ENCODE measurements at regions of chr12 and their contacts with region 1.

Region 1: GRCh38 chr12:92145731-92146496 is at the start of gene BTG1:
- DNase-seq: peak; percentile 100
- H3K4me3 Mint-ChIP-seq: peak within 1 kb of the TSS; percentile 89
- H3K27ac Mint-ChIP-seq: peak within 1 kb of the TSS; percentile 74
- H3K4me1 Mint-ChIP-seq: peaks cover 16% of the 10 kb centered on the region
- H3K27me3 Mint-ChIP-seq: no peaks in the 10 kb centered on the region
- CTCF ChIP-seq: no peak
- total RNA-seq, gene BTG1: 128 and 129 TPM in 2 replicates

Region 2: GRCh38 chr12:91382081-91382543 is 763.8 kb before region 1 on chr12:
- CTCF ChIA-PET with region 1: interaction called, 8 read pairs
- POLR2A ChIA-PET with region 1: interaction called, 154 read pairs
- intact Hi-C with region 1: loop called (anchors 1 kb)
- DNase-seq: peak; percentile 84
- H3K4me3 Mint-ChIP-seq: peak overlapping the region; percentile 78
- H3K27ac Mint-ChIP-seq: peak overlapping the region; percentile 21
- H3K4me1 Mint-ChIP-seq: peaks cover 19% of the 10 kb centered on the region
- H3K27me3 Mint-ChIP-seq: no peaks in the 10 kb centered on the region
- CTCF ChIP-seq: peak; percentile 85

Region 3: GRCh38 chr12:91778938-91779400 is 366.9 kb before region 1 on chr12:
- CTCF ChIA-PET with region 1: interaction called, 3 read pairs
- POLR2A ChIA-PET with region 1: interaction called, 101 read pairs
- intact Hi-C with region 1: loop called (anchors 2 kb)
- DNase-seq: peak; percentile 95
- H3K4me3 Mint-ChIP-seq: peak overlapping the region; percentile 65
- H3K27ac Mint-ChIP-seq: peak overlapping the region; percentile 88
- H3K4me1 Mint-ChIP-seq: peaks cover 39% of the 10 kb centered on the region
- H3K27me3 Mint-ChIP-seq: no peaks in the 10 kb centered on the region
- CTCF ChIP-seq: no peak

Region 4: DNA sequence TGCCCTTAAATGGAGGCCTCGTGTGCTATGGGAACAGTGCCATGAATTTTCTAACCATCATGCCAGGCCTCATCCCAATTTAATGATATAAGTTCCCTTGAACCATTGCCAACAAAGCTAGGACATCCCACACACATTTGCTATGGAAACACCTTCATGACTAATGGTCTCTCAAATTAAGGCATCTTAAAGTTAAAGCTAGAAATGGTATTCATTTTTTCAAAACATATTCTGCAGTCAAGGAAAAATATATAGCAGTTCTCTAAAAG is 117.5 kb before region 1 on chr12:
- CTCF ChIA-PET with region 1: no interaction called
- POLR2A ChIA-PET with region 1: interaction called, 37 read pairs
- intact Hi-C with region 1: no loop called
- DNase-seq: peak; percentile 85
- H3K4me3 Mint-ChIP-seq: no peak overlapping the region
- H3K27ac Mint-ChIP-seq: peak overlapping the region; percentile 65
- H3K4me1 Mint-ChIP-seq: peaks cover 49% of the 10 kb centered on the region
- H3K27me3 Mint-ChIP-seq: no peaks in the 10 kb centered on the region
- CTCF ChIP-seq: no peak

Region 5: GRCh38 chr12:92253301-92253700 is 107.4 kb after region 1 on chr12:
- CTCF ChIA-PET with region 1: no interaction called
- POLR2A ChIA-PET with region 1: interaction called, 52 read pairs
- intact Hi-C with region 1: no loop called
- DNase-seq: no peak
- H3K4me3 Mint-ChIP-seq: no peak overlapping the region
- H3K27ac Mint-ChIP-seq: no peak overlapping the region
- H3K4me1 Mint-ChIP-seq: no peaks in the 10 kb centered on the region
- H3K27me3 Mint-ChIP-seq: no peaks in the 10 kb centered on the region
- CTCF ChIP-seq: no peak

Region 6: GRCh38 chr12:92561543-92561899 is 415.6 kb after region 1 on chr12:
- CTCF ChIA-PET with region 1: interaction called, 4 read pairs
- POLR2A ChIA-PET with region 1: interaction called, 54 read pairs
- intact Hi-C with region 1: no loop called
- DNase-seq: peak; percentile 82
- H3K4me3 Mint-ChIP-seq: no peak overlapping the region
- H3K27ac Mint-ChIP-seq: peak overlapping the region; percentile 79
- H3K4me1 Mint-ChIP-seq: peaks cover 21% of the 10 kb centered on the region
- H3K27me3 Mint-ChIP-seq: no peaks in the 10 kb centered on the region
- CTCF ChIP-seq: no peak

Region 7: DNA sequence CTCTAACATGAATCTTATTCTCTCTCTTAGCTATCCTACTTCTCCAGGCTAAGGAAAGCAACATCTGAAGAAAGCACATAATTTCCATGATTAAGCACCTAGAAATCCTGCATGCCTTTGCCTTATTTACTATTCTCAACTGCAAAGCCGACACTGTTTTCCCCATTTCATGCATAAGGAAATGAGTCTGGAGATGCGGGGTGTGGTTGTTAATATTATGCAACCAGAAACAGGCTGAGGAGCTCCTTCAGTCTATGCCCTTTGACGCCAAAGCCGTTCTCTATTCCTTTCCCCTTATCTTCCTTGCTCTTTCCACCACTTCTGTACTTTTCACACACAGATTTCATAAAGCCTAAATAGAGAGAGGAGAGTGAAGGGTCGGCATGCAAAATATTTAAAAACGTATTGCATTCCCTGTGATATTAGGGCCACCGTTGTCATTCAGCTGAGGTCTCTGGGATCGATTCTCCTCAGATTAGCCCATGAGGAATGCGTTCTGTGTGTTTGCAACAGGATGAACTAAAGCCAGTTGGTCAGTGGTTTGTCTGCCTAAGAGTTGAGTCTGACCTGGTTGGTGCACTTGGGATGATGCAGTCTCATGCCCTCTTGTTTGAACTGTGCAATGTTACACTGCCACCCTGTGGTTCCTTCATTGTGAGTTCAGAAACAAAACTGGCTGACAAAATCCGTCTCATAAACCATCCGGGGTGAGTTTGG is 503.8 kb after region 1 on chr12:
- CTCF ChIA-PET with region 1: interaction called, 3 read pairs
- POLR2A ChIA-PET with region 1: interaction called, 9 read pairs
- intact Hi-C with region 1: loop called (anchors 2 kb)
- DNase-seq: peak; percentile 88
- H3K4me3 Mint-ChIP-seq: peak overlapping the region; percentile 49
- H3K27ac Mint-ChIP-seq: no peak overlapping the region
- H3K4me1 Mint-ChIP-seq: peaks cover 17% of the 10 kb centered on the region
- H3K27me3 Mint-ChIP-seq: no peaks in the 10 kb centered on the region
- CTCF ChIP-seq: peak; percentile 67

Measured in MCF 10A (cell line).